PC-3 (cell line): ENCODE measurements at regions of chr1 and their contacts with region 1.

Region 1: GRCh38 chr1:241396747-241397681 is 40.0 kb upstream of the RGS7 start:
- DNase-seq: peak; percentile 60
- ATAC-seq: peak; percentile 56
- H3K4me3 ChIP-seq: no peak overlapping the region
- H3K27ac ChIP-seq: no peak overlapping the region
- H3K4me1 ChIP-seq: peaks cover 26% of the 10 kb centered on the region
- H3K27me3 ChIP-seq: no peaks in the 10 kb centered on the region
- CTCF ChIP-seq: no peak

Region 2: DNA sequence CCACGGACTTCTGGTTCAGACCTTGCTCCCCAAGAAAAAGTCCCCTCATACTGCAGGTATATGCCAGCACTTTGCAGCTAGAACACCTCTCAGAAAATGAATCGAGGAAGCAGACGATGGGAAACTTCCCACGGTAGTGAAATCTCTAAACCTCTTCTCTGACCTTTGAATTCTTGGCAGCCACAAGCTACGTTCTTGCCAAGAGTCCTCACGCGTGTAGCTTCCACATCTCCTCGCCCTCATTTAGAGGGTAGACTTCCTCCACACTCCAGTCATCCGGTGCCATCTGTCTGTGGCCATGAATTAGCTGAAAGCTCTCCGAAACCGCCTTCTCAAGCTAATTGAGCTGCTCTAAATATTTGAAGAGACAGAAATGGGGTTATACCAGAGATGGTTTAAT is 167.8 kb before region 1 on chr1:
- CTCF ChIA-PET with region 1: no interaction called
- POLR2A ChIA-PET with region 1: no interaction called
- intact Hi-C with region 1: loop called (anchors 10 kb)
- DNase-seq: no peak
- ATAC-seq: no peak
- H3K4me3 ChIP-seq: no peak overlapping the region
- H3K27ac ChIP-seq: no peak overlapping the region
- H3K4me1 ChIP-seq: no peaks in the 10 kb centered on the region
- H3K27me3 ChIP-seq: peaks cover 82% of the 10 kb centered on the region
- CTCF ChIP-seq: no peak

Region 3: GRCh38 chr1:241343956-241344355 is 53.1 kb before region 1 on chr1:
- CTCF ChIA-PET with region 1: no interaction called
- POLR2A ChIA-PET with region 1: no interaction called
- intact Hi-C with region 1: loop called (anchors 2 kb)
- DNase-seq: peak; percentile 89
- ATAC-seq: peak; percentile 97
- H3K4me3 ChIP-seq: peak overlapping the region; percentile 6; the same call in 1 of the 2 replicates
- H3K27ac ChIP-seq: peak overlapping the region; percentile 32
- H3K4me1 ChIP-seq: peaks cover 15% of the 10 kb centered on the region
- H3K27me3 ChIP-seq: peaks cover 6% of the 10 kb centered on the region; the same call in 1 of the 2 replicates
- CTCF ChIP-seq: no peak

Region 4: GRCh38 chr1:241507189-241507863 is 110.3 kb after region 1 on chr1:
- CTCF ChIA-PET with region 1: no interaction called
- POLR2A ChIA-PET with region 1: no interaction called
- intact Hi-C with region 1: no loop called
- DNase-seq: no peak
- ATAC-seq: peak; percentile 65
- H3K4me3 ChIP-seq: no peak overlapping the region
- H3K27ac ChIP-seq: no peak overlapping the region
- H3K4me1 ChIP-seq: peaks cover 12% of the 10 kb centered on the region; the same call in 1 of the 2 replicates
- H3K27me3 ChIP-seq: no peaks in the 10 kb centered on the region
- CTCF ChIP-seq: no peak

Region 5: GRCh38 chr1:241551759-241552638 is 155.0 kb after region 1 on chr1:
- CTCF ChIA-PET with region 1: no interaction called
- POLR2A ChIA-PET with region 1: no interaction called
- intact Hi-C with region 1: no loop called
- DNase-seq: no peak
- ATAC-seq: no peak
- H3K4me3 ChIP-seq: no peak overlapping the region
- H3K27ac ChIP-seq: no peak overlapping the region
- H3K4me1 ChIP-seq: no peaks in the 10 kb centered on the region
- H3K27me3 ChIP-seq: no peaks in the 10 kb centered on the region
- CTCF ChIP-seq: no peak